MCF 10A (cell line): ENCODE measurements at regions of chr15 and their contacts with region 1.

Region 1: DNA sequence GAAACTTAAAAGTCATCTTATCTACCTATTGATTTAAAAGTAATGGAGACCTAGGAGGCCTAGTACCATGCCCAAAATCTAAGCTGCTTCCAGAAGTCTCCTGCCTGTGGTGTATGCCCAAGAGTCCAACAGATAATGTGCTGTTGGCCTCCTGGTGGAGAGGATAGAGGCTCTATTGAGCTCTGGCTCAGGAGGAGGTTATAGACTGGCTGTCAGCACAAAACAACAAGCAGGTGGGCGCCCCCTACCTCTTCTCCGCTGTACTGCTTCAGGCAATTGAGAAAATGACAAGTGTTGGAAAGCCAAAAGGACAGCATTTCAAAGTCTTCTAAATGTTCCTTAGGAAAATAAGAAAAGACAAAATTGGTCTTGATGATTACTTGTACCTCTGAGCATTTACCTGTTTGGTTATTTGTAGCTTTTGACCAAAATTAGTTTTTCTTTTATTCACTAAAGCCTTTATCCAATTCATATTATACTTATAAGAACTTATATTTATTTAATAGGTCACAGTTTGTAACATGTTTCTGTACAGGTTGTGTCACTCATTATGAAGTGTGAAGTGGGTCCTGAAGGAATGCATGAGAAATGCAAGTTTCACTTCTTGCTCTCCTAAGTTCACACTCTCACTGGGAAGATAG is 17.2 kb upstream of the GNB5 start:
- DNase-seq: peak; percentile 73
- H3K4me3 Mint-ChIP-seq: no peak overlapping the region
- H3K27ac Mint-ChIP-seq: no peak overlapping the region
- H3K4me1 Mint-ChIP-seq: no peaks in the 10 kb centered on the region
- H3K27me3 Mint-ChIP-seq: no peaks in the 10 kb centered on the region
- CTCF ChIP-seq: peak; percentile 83

Region 2: DNA sequence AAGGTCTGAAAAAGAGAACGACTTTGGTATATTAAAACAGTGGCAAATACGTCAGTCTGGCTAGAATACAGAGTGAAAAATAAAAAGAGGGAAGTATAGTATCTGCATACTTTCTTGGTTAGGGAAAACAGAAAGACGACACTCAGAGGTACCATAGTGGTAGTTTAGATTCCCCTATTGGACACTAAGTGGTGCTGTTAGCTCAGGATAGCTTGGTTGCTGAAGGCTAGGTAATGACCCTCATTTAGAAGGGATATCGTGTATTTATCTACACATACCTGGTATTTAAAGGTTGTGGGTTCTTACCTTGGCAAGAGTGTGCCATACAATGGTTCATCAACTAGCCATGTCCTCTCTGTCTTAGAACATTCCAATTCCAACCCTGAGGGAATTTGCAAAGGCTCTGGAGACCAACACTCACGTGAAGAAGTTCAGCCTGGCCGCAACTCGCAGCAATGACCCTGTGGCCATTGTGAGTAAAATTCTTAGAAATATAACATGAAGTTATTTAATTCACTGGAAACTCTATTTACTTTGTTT is 426.0 kb before region 1 on chr15:
- CTCF ChIA-PET with region 1: no interaction called
- POLR2A ChIA-PET with region 1: no interaction called
- intact Hi-C with region 1: loop called (anchors 5 kb)
- DNase-seq: peak; percentile 55
- H3K4me3 Mint-ChIP-seq: no peak overlapping the region
- H3K27ac Mint-ChIP-seq: no peak overlapping the region
- H3K4me1 Mint-ChIP-seq: peaks cover 16% of the 10 kb centered on the region
- H3K27me3 Mint-ChIP-seq: no peaks in the 10 kb centered on the region
- CTCF ChIP-seq: peak; percentile 59